ENCODE measurements at regions of chr16 and their contacts with region 1.

Region 1: GRCh38 chr16:9258423-9259051 is 167.1 kb downstream of the HAPSTR1 start:
- DNase-seq: peak; percentile 43 to 83
- H3K4me3 ChIP-seq: no peak overlapping the region
- H3K27ac ChIP-seq: no peak overlapping the region
- H3K4me1 ChIP-seq: peaks cover 0 to 4% (median under 1%) of the 10 kb centered on the region in 4 experiments; a peak in 3 of 7 replicates
- H3K27me3 ChIP-seq: no peaks in the 10 kb centered on the region
- CTCF ChIP-seq: peak; percentile 84 to 92 (median 84)
- EP300 ChIP-seq: no peak
- POLR2A ChIP-seq: no peak
- RAD21 ChIP-seq: peak; percentile 95 to 97

Region 2: DNA sequence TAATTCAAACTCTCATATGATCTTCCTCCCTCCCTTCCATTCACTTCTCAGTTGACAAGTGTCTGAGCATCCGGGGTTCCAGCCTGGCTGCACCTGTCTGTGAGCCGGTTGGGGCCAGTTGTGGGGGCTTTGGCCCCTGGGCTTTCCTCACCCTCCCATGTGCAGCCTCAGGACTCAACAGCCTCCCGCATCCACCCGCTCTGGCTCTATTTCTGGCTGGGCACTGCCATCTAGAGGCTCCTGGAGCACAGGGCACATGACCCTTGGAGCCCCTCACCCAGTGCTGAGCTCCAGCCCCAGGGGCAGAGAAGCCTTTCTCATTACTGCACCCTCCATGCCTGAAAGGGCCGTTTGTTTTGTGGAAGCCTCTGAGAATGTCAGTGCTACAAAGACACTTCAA is 123.8 kb before region 1 on chr16:
- CTCF ChIA-PET with region 1: interaction called, 16 read pairs
- POLR2A ChIA-PET with region 1: no interaction called
- DNase-seq: peak in 1 of 2 experiments; percentile 79
- H3K4me3 ChIP-seq: no peak overlapping the region
- H3K27ac ChIP-seq: no peak overlapping the region
- H3K4me1 ChIP-seq: no peaks in the 10 kb centered on the region; a peak in 2 of 7 replicates
- H3K27me3 ChIP-seq: no peaks in the 10 kb centered on the region
- CTCF ChIP-seq: peak; percentile 76 to 86 (median 84)
- EP300 ChIP-seq: no peak
- POLR2A ChIP-seq: no peak
- RAD21 ChIP-seq: peak; percentile 89 to 94

Region 3: GRCh38 chr16:9248162-9248561 is 10.4 kb before region 1 on chr16:
- CTCF ChIA-PET with region 1: interaction called, 11 read pairs
- POLR2A ChIA-PET with region 1: no interaction called
- DNase-seq: no peak
- H3K4me3 ChIP-seq: no peak overlapping the region
- H3K27ac ChIP-seq: no peak overlapping the region
- H3K4me1 ChIP-seq: no peaks in the 10 kb centered on the region
- H3K27me3 ChIP-seq: no peaks in the 10 kb centered on the region
- CTCF ChIP-seq: no peak
- EP300 ChIP-seq: no peak
- POLR2A ChIP-seq: no peak
- RAD21 ChIP-seq: no peak

Region 4: GRCh38 chr16:9275377-9275776 is 16.8 kb after region 1 on chr16:
- CTCF ChIA-PET with region 1: interaction called, 47 read pairs
- POLR2A ChIA-PET with region 1: no interaction called
- DNase-seq: no peak
- H3K4me3 ChIP-seq: no peak overlapping the region
- H3K27ac ChIP-seq: no peak overlapping the region
- H3K4me1 ChIP-seq: no peaks in the 10 kb centered on the region; a peak in 1 of 7 replicates
- H3K27me3 ChIP-seq: 0 out of 7 replicates have a peak, but pooled peaks cover 0 to 2% (median 0%) of the 10 kb centered on the region in 4 experiments
- CTCF ChIP-seq: no peak
- EP300 ChIP-seq: no peak
- POLR2A ChIP-seq: no peak
- RAD21 ChIP-seq: no peak

Region 5: GRCh38 chr16:9297437-9298113 is 39.0 kb after region 1 on chr16:
- CTCF ChIA-PET with region 1: interaction called, 18 read pairs
- POLR2A ChIA-PET with region 1: no interaction called
- DNase-seq: peak; percentile 21 to 77
- H3K4me3 ChIP-seq: no peak overlapping the region
- H3K27ac ChIP-seq: no peak overlapping the region
- H3K4me1 ChIP-seq: no peaks in the 10 kb centered on the region
- H3K27me3 ChIP-seq: peaks cover 0 to 1% (median 0%) of the 10 kb centered on the region in 4 experiments; a peak in 1 of 7 replicates
- CTCF ChIP-seq: peak; percentile 81 to 96 (median 93)
- EP300 ChIP-seq: no peak
- POLR2A ChIP-seq: no peak
- RAD21 ChIP-seq: peak; percentile 96 to 97

Region 6: DNA sequence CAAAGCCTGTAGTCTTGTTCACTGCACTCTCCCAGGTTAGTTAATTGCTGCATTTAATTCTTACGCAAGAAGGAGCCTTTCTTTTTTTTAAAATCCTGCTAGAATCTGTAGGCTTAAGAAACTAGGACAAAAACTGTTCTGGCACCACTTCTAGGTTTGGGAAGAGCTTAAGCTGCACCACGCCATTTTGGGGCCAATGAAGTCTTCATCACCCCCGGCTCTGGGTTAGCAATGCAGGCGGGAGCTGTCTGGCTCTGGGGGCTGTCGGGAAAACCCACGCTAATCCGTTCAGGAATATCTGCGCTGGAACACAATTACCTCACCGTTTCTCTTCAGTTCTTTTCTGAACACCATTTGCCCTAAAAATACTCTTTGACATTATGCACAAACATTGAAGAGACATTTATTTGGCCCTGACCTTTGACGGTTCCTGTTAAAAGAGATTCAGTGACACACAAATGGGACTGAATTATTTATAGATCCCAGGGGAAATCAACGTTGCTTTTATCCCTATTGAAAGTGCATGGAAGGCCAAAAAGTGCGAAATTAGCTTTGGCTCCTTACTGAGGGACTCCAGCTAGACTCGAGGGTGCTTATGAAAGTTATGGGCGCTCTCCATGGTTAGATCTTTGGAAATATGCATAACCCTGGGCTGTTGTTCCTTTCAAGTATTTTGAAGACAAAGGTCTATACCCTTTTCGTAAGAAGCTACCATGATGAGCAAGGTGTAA is 82.2 kb after region 1 on chr16:
- CTCF ChIA-PET with region 1: no interaction called
- POLR2A ChIA-PET with region 1: no interaction called
- DNase-seq: no peak
- H3K4me3 ChIP-seq: no peak overlapping the region
- H3K27ac ChIP-seq: no peak overlapping the region
- H3K4me1 ChIP-seq: peaks cover 0 to 2% (median 0%) of the 10 kb centered on the region in 4 experiments; a peak in 2 of 7 replicates
- H3K27me3 ChIP-seq: peaks cover 0 to 1% (median 0%) of the 10 kb centered on the region in 4 experiments; a peak in 1 of 7 replicates
- CTCF ChIP-seq: no peak
- EP300 ChIP-seq: no peak
- POLR2A ChIP-seq: no peak
- RAD21 ChIP-seq: no peak

Region 7: GRCh38 chr16:10181196-10182162 is 922.9 kb after region 1 on chr16:
- CTCF ChIA-PET with region 1: interaction called, 86 read pairs
- POLR2A ChIA-PET with region 1: no interaction called
- DNase-seq: peak; percentile 70 to 95
- H3K4me3 ChIP-seq: peak overlapping the region; percentile 50 to 73 (median 60)
- H3K27ac ChIP-seq: no peak overlapping the region
- H3K4me1 ChIP-seq: peaks cover 0 to 6% (median 0%) of the 10 kb centered on the region in 4 experiments; a peak in 3 of 7 replicates
- H3K27me3 ChIP-seq: peaks cover 26 to 50% (median 44%) of the 10 kb centered on the region in 4 experiments
- CTCF ChIP-seq: peak; percentile 75 to 97 (median 95)
- EP300 ChIP-seq: no peak
- POLR2A ChIP-seq: no peak
- RAD21 ChIP-seq: peak; percentile 93

Measured in H1 (cell line).